ENCODE measurements at regions of chr12 and their contacts with region 1.

Region 1: GRCh38 chr12:8609061-8609570 is 3.5 kb downstream of the AICDA start:
- DNase-seq: no peak
- ATAC-seq: peak in 1 of 4 donors; percentile 55
- H3K4me3 ChIP-seq: no peak overlapping the region
- H3K27ac ChIP-seq: no peak overlapping the region
- H3K4me1 ChIP-seq: peaks cover 0 to 9% (median 0%) of the 10 kb centered on the region in 12 donors
- H3K27me3 ChIP-seq: no peaks in the 10 kb centered on the region
- CTCF ChIP-seq: peak; percentile 48 to 81 (median 67)
- POLR2A ChIP-seq: no peak

Region 2: DNA sequence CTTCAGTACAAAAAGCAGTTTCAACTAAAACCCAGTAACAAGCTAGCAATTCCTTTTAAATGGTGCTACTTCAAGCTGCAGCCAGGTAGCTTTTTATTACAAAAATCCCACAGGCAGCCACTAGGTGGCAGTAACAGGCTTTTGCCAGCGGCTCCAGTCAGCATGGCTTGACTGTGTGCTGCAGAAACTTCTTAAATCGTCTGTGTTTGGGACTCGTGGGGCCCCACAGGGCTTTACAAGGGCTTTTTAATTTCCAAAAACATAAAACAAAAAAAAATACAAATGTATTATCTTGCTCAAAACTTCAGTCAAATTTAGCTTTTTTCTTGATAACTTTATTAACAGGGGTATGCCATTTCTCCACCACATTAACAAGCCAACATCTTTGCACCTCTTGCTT is 64.8 kb before region 1 on chr12:
- intact Hi-C with region 1: loop called (anchors 2 to 5 kb)
- DNase-seq: peak in 4 of 5 donors; percentile 51 to 62 (median 56)
- ATAC-seq: peak; percentile 54 to 65 (median 62)
- H3K4me3 ChIP-seq: no peak overlapping the region
- H3K27ac ChIP-seq: no peak overlapping the region
- H3K4me1 ChIP-seq: peaks cover 0 to 9% (median 0%) of the 10 kb centered on the region in 12 donors
- H3K27me3 ChIP-seq: peaks cover 0 to 16% (median 0%) of the 10 kb centered on the region in 9 donors
- CTCF ChIP-seq: peak; percentile 75 to 97 (median 92)
- POLR2A ChIP-seq: no peak

Region 3: GRCh38 chr12:8549381-8549780 is 59.7 kb before region 1 on chr12:
- intact Hi-C with region 1: loop called (anchors 2 to 5 kb)
- DNase-seq: no peak
- ATAC-seq: no peak
- H3K4me3 ChIP-seq: no peak overlapping the region
- H3K27ac ChIP-seq: no peak overlapping the region
- H3K4me1 ChIP-seq: no peaks in the 10 kb centered on the region
- H3K27me3 ChIP-seq: peaks cover 0 to 7% (median 0%) of the 10 kb centered on the region in 9 donors
- CTCF ChIP-seq: no peak
- POLR2A ChIP-seq: no peak